GM18951 (cell line): ENCODE measurements at regions of chr1 and their contacts with region 1.

Region 1: DNA sequence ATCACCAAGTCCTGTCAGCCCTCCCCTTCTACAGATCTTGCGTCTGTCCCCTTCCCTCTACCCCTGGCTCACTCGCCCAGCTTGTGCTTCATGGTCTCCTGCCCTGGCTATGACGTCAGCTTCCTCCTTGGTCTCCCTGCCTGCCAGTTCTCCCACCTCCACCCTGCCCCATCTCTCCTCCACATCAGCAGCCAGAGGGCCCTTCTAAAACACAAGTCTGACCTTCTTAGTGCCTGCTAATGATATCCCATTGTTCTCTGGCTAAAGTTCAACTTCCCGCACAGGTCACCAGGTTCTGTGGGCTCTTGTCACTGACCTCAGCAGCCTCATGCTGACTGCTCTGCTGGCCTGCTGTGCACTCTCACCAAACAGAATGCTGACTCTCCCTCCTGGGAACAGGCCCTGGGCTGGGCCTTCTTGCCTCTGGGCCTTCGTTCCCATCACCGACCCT is 24.7 kb upstream of the MYCL start:
- POLR2A ChIP-seq: no peak

Region 2: DNA sequence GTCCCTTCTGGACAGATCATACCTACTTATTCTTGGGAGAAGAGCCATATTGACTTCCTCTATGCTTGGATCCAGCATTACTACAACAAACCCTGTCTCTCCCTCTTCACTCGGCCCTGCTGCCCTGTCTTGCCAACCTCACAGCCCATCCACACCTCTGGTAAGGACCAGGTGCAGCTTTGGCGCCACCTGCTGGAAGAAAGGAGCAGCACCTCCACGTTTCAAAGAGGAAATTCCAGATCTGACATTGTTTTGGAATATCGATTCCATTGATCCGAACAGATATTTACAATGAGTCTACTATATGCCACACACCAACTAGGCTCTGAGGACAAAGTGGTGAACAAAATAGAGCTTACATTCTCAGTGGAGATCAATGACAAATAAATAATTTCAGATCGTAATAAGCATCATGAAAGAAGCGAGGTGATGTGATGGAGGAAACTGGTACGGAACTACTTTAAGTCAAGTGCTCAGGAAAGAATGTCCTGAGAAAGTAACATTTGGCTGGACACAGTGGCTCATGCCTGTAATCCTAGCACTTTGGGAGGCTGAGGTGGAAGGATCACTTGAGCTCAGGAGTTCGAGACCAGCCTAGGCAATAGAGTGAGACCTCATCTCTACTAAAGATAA is 47.3 kb after region 1 on chr1:
- in situ Hi-C with region 1: loop called (anchors 5 kb)
- POLR2A ChIP-seq: no peak

Region 3: DNA sequence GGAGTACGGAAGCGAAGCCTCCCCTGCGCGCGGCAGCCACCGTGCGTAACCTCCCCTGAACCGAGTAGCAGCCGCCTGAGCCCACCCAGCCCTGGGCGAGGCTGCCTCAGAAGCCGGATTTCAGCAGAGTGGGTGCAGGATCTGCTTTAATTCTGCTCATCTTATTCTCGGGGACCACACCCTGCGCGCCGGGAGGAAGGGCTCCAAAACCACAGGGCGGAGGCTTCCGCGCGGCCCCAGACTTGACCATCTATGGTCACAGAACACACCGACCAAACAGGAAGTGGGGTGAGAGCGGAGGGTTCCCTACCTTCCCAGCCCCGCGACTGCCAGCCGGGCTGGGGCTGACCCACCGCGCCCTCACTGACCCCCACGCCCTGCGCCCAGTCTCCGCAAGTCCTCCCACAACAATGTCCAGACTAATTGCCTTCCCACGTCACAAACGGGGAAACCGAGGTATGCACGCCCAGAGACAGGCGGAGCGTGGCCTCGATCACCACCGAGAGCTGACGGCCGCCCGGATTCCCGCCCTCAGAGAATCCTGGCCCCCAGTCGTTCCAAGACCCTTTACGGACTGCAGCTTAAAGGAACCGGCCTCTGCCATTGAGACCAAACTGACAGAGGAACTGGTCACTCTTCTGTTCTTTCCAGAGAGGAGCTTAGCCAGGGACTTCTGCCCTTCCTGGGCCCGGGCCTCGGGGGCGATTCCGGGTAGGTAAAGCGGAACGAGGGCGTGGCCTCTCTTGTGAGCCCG is 113.6 kb after region 1 on chr1:
- in situ Hi-C with region 1: loop called (anchors 10 kb)
- POLR2A ChIP-seq: peak; percentile 86